Calu3 (cell line): ENCODE measurements at regions of chr3 and their contacts with region 1.

Region 1: DNA sequence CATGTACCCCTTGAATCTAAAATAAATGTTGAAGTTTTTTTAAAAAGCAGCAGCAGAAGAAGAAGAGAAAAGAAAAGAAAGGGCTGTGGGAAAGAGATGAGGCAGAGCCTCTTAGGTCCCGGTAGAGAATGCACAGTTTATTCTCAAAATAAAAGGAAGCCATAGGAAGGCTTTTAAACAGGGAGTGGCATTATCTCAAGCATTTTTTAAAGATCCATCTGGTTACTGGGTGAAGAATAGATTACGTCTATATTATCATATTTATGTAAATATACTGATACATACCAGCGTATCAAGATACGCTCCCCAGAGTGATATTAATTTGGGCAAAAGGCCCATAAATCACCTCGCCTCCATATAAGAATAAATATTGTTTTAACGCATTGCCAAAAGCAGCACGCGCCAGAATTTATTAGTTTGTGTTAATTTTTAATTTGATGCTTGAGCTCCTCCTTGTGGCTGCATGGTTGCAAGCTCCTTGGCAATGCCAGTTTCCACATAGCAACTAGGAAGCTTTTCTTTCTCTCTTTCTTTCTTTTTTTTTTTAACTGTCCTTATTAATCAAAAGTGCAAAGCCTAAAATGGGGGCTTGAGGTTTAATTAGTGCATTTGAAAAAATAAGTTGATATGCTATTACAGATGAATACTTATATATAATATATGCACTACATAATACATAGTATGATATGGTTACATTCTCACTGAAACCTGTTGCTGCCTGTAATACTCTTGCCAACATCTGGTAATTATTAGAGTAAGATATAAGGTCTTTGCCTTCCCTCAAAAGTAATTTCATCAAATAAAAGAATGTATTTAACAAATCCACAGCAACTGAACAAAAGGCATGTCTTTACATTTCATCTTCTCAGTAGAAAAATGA is 242.8 kb upstream of the UBE2E2 start:
- DNase-seq: peak; percentile 45
- H3K4me3 Mint-ChIP-seq: no peak overlapping the region
- H3K27ac Mint-ChIP-seq: no peak overlapping the region
- H3K4me1 Mint-ChIP-seq: no peaks in the 10 kb centered on the region
- H3K27me3 Mint-ChIP-seq: peaks cover 51% of the 10 kb centered on the region
- CTCF ChIP-seq: peak; percentile 59

Region 2: GRCh38 chr3:22175947-22176346 is 784.4 kb before region 1 on chr3:
- CTCF ChIA-PET with region 1: interaction called, 4 read pairs
- intact Hi-C with region 1: loop called (anchors 1 kb)
- DNase-seq: no peak
- H3K4me3 Mint-ChIP-seq: no peak overlapping the region
- H3K27ac Mint-ChIP-seq: no peak overlapping the region
- H3K4me1 Mint-ChIP-seq: no peaks in the 10 kb centered on the region
- H3K27me3 Mint-ChIP-seq: no peaks in the 10 kb centered on the region
- CTCF ChIP-seq: no peak

Region 3: GRCh38 chr3:22414239-22414638 is 546.1 kb before region 1 on chr3:
- CTCF ChIA-PET with region 1: no interaction called
- intact Hi-C with region 1: no loop called
- DNase-seq: no peak
- H3K4me3 Mint-ChIP-seq: no peak overlapping the region
- H3K27ac Mint-ChIP-seq: no peak overlapping the region
- H3K4me1 Mint-ChIP-seq: no peaks in the 10 kb centered on the region
- H3K27me3 Mint-ChIP-seq: no peaks in the 10 kb centered on the region
- CTCF ChIP-seq: no peak

Region 4: GRCh38 chr3:22491343-22491742 is 469.0 kb before region 1 on chr3:
- CTCF ChIA-PET with region 1: no interaction called
- intact Hi-C with region 1: no loop called
- DNase-seq: no peak
- H3K4me3 Mint-ChIP-seq: no peak overlapping the region
- H3K27ac Mint-ChIP-seq: no peak overlapping the region
- H3K4me1 Mint-ChIP-seq: no peaks in the 10 kb centered on the region
- H3K27me3 Mint-ChIP-seq: no peaks in the 10 kb centered on the region
- CTCF ChIP-seq: no peak

Region 5: GRCh38 chr3:22565393-22565792 is 395.0 kb before region 1 on chr3:
- CTCF ChIA-PET with region 1: interaction called, 4 read pairs
- intact Hi-C with region 1: loop called (anchors 1 kb)
- DNase-seq: no peak
- H3K4me3 Mint-ChIP-seq: no peak overlapping the region
- H3K27ac Mint-ChIP-seq: no peak overlapping the region
- H3K4me1 Mint-ChIP-seq: no peaks in the 10 kb centered on the region
- H3K27me3 Mint-ChIP-seq: no peaks in the 10 kb centered on the region
- CTCF ChIP-seq: no peak

Region 6: DNA sequence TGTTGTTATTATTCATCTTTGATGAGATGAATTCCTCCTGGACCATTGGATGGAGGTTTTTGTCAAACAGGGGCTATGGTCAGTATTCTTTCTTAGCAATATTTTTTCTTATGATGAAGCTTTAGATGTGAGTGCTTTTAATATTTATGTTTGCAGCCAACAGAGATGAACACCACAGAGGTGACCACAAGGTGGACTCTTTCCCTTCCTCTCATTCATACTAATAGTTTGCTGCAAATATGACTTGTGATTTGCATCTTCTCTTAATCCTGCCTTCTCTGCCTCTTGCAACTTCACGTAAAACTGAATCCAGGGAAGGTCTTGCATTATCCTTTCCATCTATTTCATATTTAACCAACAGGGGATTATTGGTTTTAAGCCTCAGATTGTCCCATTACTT is 230.4 kb before region 1 on chr3:
- CTCF ChIA-PET with region 1: interaction called, 3 read pairs
- intact Hi-C with region 1: loop called (anchors 1 kb)
- DNase-seq: peak; percentile 4
- H3K4me3 Mint-ChIP-seq: no peak overlapping the region
- H3K27ac Mint-ChIP-seq: no peak overlapping the region
- H3K4me1 Mint-ChIP-seq: peaks cover 17% of the 10 kb centered on the region
- H3K27me3 Mint-ChIP-seq: no peaks in the 10 kb centered on the region
- CTCF ChIP-seq: no peak

Region 7: DNA sequence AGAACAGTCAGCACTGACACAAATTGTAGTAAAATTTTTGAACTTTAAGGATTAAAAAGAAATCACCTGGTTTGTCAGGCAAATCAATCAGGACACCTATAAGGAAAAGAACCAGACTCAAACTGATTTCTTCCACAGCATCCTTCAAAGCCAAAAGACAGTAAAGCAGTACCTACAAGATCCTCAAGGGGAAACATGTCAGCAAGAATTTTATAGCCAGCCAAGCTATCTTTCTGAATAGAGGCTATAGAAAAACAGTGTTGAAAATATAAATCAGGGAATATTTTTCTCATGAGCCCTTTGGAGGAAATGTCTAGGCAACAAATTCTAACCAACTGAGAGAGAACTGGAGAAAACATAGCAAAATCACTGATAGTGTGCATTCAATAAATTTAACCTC is 58.7 kb before region 1 on chr3:
- CTCF ChIA-PET with region 1: no interaction called
- intact Hi-C with region 1: no loop called
- DNase-seq: no peak
- H3K4me3 Mint-ChIP-seq: no peak overlapping the region
- H3K27ac Mint-ChIP-seq: no peak overlapping the region
- H3K4me1 Mint-ChIP-seq: no peaks in the 10 kb centered on the region
- H3K27me3 Mint-ChIP-seq: no peaks in the 10 kb centered on the region
- CTCF ChIP-seq: no peak

Region 8: DNA sequence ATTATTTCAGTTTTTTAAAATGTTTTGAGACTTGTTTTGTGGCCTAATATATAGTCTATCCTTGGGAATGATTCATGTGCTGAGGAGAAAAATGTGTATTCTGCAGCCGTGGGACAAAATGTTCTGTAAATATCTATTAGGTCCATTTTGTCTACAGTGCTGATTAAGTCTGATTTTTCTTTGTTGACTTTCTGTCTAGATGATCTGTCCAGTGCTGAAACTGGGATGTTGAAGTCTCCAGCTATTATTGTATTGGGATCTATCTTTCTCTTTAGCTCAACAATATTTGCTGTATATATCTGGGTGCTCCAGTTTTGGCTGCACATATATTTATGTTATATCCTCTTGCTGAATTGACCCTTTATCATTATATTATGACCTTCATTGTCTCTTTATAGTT is 327.9 kb after region 1 on chr3:
- CTCF ChIA-PET with region 1: no interaction called
- intact Hi-C with region 1: no loop called
- DNase-seq: no peak
- H3K4me3 Mint-ChIP-seq: no peak overlapping the region
- H3K27ac Mint-ChIP-seq: no peak overlapping the region
- H3K4me1 Mint-ChIP-seq: no peaks in the 10 kb centered on the region
- H3K27me3 Mint-ChIP-seq: no peaks in the 10 kb centered on the region
- CTCF ChIP-seq: no peak